BJ (cell line): ENCODE measurements at regions of chr11 and their contacts with region 1.

Region 1: GRCh38 chr11:32792948-32793475 is 1.4 kb downstream of the CCDC73 start:
- DNase-seq: peak; percentile 1
- H3K4me3 ChIP-seq: no peak overlapping the region
- H3K27me3 ChIP-seq: peaks cover 2% of the 10 kb centered on the region; the same call in 1 of the 2 replicates
- CTCF ChIP-seq: peak; percentile 65

Region 2: GRCh38 chr11:32323814-32324130 is 469.2 kb before region 1 on chr11:
- CTCF ChIA-PET with region 1: interaction called, 57 read pairs
- POLR2A ChIA-PET with region 1: no interaction called
- DNase-seq: no peak
- H3K4me3 ChIP-seq: no peak overlapping the region
- H3K27me3 ChIP-seq: no peaks in the 10 kb centered on the region; the same call in 1 of the 2 replicates
- CTCF ChIP-seq: no peak

Region 3: GRCh38 chr11:32884770-32885384 is 91.9 kb after region 1 on chr11:
- CTCF ChIA-PET with region 1: no interaction called
- POLR2A ChIA-PET with region 1: no interaction called
- DNase-seq: no peak
- H3K4me3 ChIP-seq: no peak overlapping the region
- H3K27me3 ChIP-seq: no peaks in the 10 kb centered on the region; the same call in 1 of the 2 replicates
- CTCF ChIP-seq: peak; percentile 61